PC-9 (cell line): ENCODE measurements at regions of chr3 and their contacts with region 1.

Region 1: DNA sequence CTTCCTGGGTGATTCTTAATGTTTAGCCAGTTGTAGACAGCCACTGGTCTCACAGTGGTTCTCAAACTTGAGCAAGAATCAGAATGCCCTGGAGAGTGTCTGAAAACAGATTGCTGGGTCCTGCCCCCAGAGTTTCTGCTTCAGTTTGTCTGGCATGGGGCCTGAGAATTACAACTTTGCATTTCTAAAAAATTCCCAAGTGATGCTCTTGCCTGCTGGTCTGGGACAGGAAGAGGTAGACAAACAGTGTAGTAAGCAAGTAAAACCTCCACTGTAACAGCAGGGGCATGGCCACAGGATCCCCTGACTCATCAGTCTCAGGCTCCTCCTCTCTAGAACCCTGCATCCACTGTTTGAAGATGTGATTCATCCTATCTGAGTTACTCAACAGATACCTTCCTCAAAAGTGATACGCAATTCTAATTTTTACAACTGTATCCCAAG is 36.5 kb downstream of the DZIP1L start:
- DNase-seq: peak in 1 of 2 experiments; percentile 89
- H3K4me3 ChIP-seq: no peak overlapping the region
- H3K27ac ChIP-seq: peak overlapping the region; percentile 89
- H3K4me1 ChIP-seq: peaks cover 54% of the 10 kb centered on the region
- H3K27me3 ChIP-seq: no peaks in the 10 kb centered on the region
- CTCF ChIP-seq: no peak

Region 2: DNA sequence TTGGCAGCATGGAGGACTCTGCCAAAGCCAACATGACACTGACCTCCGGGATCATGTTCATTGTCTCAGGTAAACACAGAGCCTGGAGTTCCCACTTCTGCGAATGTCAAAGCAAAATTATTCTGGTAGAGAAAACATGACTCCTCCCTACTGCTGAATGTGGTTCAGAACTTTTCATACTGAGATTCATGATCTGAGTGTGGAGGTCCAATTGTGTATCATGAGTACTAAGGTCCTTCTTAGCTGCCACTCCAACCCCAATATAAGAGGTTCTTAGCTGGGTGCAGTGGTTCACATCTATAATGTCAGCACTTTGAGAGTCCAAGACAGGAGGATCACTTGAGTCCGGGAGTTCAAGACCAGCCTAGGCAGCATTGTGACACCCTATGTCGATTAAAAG is 55.2 kb before region 1 on chr3:
- CTCF ChIA-PET with region 1: no interaction called
- POLR2A ChIA-PET with region 1: no interaction called
- intact Hi-C with region 1: no loop called
- DNase-seq: no peak
- H3K4me3 ChIP-seq: no peak overlapping the region
- H3K27ac ChIP-seq: no peak overlapping the region
- H3K4me1 ChIP-seq: no peaks in the 10 kb centered on the region
- H3K27me3 ChIP-seq: no peaks in the 10 kb centered on the region
- CTCF ChIP-seq: no peak

Region 3: GRCh38 chr3:138118612-138119422 is 39.9 kb after region 1 on chr3:
- CTCF ChIA-PET with region 1: no interaction called
- POLR2A ChIA-PET with region 1: no interaction called
- intact Hi-C with region 1: loop called (anchors 2 kb)
- DNase-seq: peak; percentile 56 to 79
- H3K4me3 ChIP-seq: no peak overlapping the region
- H3K27ac ChIP-seq: no peak overlapping the region
- H3K4me1 ChIP-seq: peaks cover 9% of the 10 kb centered on the region
- H3K27me3 ChIP-seq: no peaks in the 10 kb centered on the region
- CTCF ChIP-seq: peak; percentile 91